ENCODE measurements at regions of chr1 and their contacts with region 1.

Region 1: GRCh38 chr1:87292684-87293493 is 35.8 kb upstream of the LMO4 start:
- DNase-seq: peak; percentile 66
- H3K4me3 ChIP-seq: no peak overlapping the region
- H3K27ac ChIP-seq: no peak overlapping the region
- H3K4me1 ChIP-seq: no peaks in the 10 kb centered on the region
- H3K27me3 ChIP-seq: peaks cover 0 to 7% of the 10 kb centered on the region in 2 experiments
- CTCF ChIP-seq: peak; percentile 40 to 67
- POLR2A ChIP-seq: no peak

Region 2: GRCh38 chr1:87024936-87025540 is 267.9 kb before region 1 on chr1:
- CTCF ChIA-PET with region 1: no interaction called
- POLR2A ChIA-PET with region 1: no interaction called
- dilution Hi-C with region 1: no loop called
- intact Hi-C with region 1: no loop called
- DNase-seq: peak; percentile 56
- H3K4me3 ChIP-seq: no peak overlapping the region
- H3K27ac ChIP-seq: no peak overlapping the region
- H3K4me1 ChIP-seq: peaks cover 23% of the 10 kb centered on the region
- H3K27me3 ChIP-seq: no peaks in the 10 kb centered on the region
- CTCF ChIP-seq: peak; percentile 35 to 46
- POLR2A ChIP-seq: no peak

Region 3: GRCh38 chr1:87131809-87132283 is 161.0 kb before region 1 on chr1:
- CTCF ChIA-PET with region 1: interaction called, 3 read pairs
- POLR2A ChIA-PET with region 1: no interaction called
- dilution Hi-C with region 1: no loop called
- intact Hi-C with region 1: loop called (anchors 1 kb)
- DNase-seq: peak; percentile 70
- H3K4me3 ChIP-seq: peak overlapping the region in 2 of 3 experiments; percentile 16 to 37
- H3K27ac ChIP-seq: no peak overlapping the region
- H3K4me1 ChIP-seq: peaks cover 2% of the 10 kb centered on the region
- H3K27me3 ChIP-seq: peaks cover 0 to 13% of the 10 kb centered on the region in 2 experiments
- CTCF ChIP-seq: peak; percentile 94 to 96
- POLR2A ChIP-seq: no peak

Region 4: GRCh38 chr1:87143413-87144135 is 149.3 kb before region 1 on chr1:
- CTCF ChIA-PET with region 1: no interaction called
- POLR2A ChIA-PET with region 1: no interaction called
- dilution Hi-C with region 1: no loop called
- intact Hi-C with region 1: no loop called
- DNase-seq: no peak
- H3K4me3 ChIP-seq: no peak overlapping the region
- H3K27ac ChIP-seq: no peak overlapping the region
- H3K4me1 ChIP-seq: no peaks in the 10 kb centered on the region
- H3K27me3 ChIP-seq: peaks cover 3 to 20% of the 10 kb centered on the region in 2 experiments
- CTCF ChIP-seq: no peak
- POLR2A ChIP-seq: no peak

Region 5: GRCh38 chr1:87274851-87275250 is 18.0 kb before region 1 on chr1:
- CTCF ChIA-PET with region 1: interaction called, 20 read pairs
- POLR2A ChIA-PET with region 1: no interaction called
- dilution Hi-C with region 1: no loop called
- intact Hi-C with region 1: no loop called
- DNase-seq: no peak
- H3K4me3 ChIP-seq: no peak overlapping the region
- H3K27ac ChIP-seq: no peak overlapping the region
- H3K4me1 ChIP-seq: no peaks in the 10 kb centered on the region
- H3K27me3 ChIP-seq: peaks cover 0 to 10% of the 10 kb centered on the region in 2 experiments
- CTCF ChIP-seq: no peak
- POLR2A ChIP-seq: no peak

Region 6: GRCh38 chr1:87464022-87464490 is 171.2 kb after region 1 on chr1:
- CTCF ChIA-PET with region 1: no interaction called
- POLR2A ChIA-PET with region 1: no interaction called
- dilution Hi-C with region 1: no loop called
- intact Hi-C with region 1: no loop called
- DNase-seq: no peak
- H3K4me3 ChIP-seq: no peak overlapping the region
- H3K27ac ChIP-seq: no peak overlapping the region
- H3K4me1 ChIP-seq: no peaks in the 10 kb centered on the region
- H3K27me3 ChIP-seq: peaks cover 0 to 3% of the 10 kb centered on the region in 2 experiments
- CTCF ChIP-seq: no peak
- POLR2A ChIP-seq: no peak

Region 7: GRCh38 chr1:87684194-87684593 is 391.3 kb after region 1 on chr1:
- CTCF ChIA-PET with region 1: no interaction called
- POLR2A ChIA-PET with region 1: no interaction called
- dilution Hi-C with region 1: no loop called
- intact Hi-C with region 1: loop called (anchors 10 kb)
- DNase-seq: peak; percentile 55
- H3K4me3 ChIP-seq: peak overlapping the region; percentile 36 to 74 (median 42)
- H3K27ac ChIP-seq: peak overlapping the region; percentile 6
- H3K4me1 ChIP-seq: peaks cover 23% of the 10 kb centered on the region
- H3K27me3 ChIP-seq: no peaks in the 10 kb centered on the region
- CTCF ChIP-seq: no peak
- POLR2A ChIP-seq: no peak

Region 8: GRCh38 chr1:88061492-88062177 is 768.7 kb after region 1 on chr1:
- CTCF ChIA-PET with region 1: interaction called, 18 read pairs
- POLR2A ChIA-PET with region 1: no interaction called
- dilution Hi-C with region 1: no loop called
- intact Hi-C with region 1: loop called (anchors 1 kb)
- DNase-seq: peak; percentile 59
- H3K4me3 ChIP-seq: no peak overlapping the region
- H3K27ac ChIP-seq: no peak overlapping the region
- H3K4me1 ChIP-seq: peaks cover 6% of the 10 kb centered on the region
- H3K27me3 ChIP-seq: no peaks in the 10 kb centered on the region
- CTCF ChIP-seq: peak; percentile 65 to 67
- POLR2A ChIP-seq: no peak

Region 9: GRCh38 chr1:88302843-88303486 is 1010.1 kb after region 1 on chr1:
- CTCF ChIA-PET with region 1: interaction called, 4 read pairs
- POLR2A ChIA-PET with region 1: no interaction called
- dilution Hi-C with region 1: no loop called
- intact Hi-C with region 1: loop called (anchors 1 kb)
- DNase-seq: peak; percentile 53
- H3K4me3 ChIP-seq: no peak overlapping the region
- H3K27ac ChIP-seq: no peak overlapping the region
- H3K4me1 ChIP-seq: no peaks in the 10 kb centered on the region
- H3K27me3 ChIP-seq: peaks cover 4 to 13% of the 10 kb centered on the region in 2 experiments
- CTCF ChIP-seq: peak; percentile 11 to 14
- POLR2A ChIP-seq: no peak